HepG2 (cell line): ENCODE measurements at regions of chr7 and their contacts with region 1.

Region 1: DNA sequence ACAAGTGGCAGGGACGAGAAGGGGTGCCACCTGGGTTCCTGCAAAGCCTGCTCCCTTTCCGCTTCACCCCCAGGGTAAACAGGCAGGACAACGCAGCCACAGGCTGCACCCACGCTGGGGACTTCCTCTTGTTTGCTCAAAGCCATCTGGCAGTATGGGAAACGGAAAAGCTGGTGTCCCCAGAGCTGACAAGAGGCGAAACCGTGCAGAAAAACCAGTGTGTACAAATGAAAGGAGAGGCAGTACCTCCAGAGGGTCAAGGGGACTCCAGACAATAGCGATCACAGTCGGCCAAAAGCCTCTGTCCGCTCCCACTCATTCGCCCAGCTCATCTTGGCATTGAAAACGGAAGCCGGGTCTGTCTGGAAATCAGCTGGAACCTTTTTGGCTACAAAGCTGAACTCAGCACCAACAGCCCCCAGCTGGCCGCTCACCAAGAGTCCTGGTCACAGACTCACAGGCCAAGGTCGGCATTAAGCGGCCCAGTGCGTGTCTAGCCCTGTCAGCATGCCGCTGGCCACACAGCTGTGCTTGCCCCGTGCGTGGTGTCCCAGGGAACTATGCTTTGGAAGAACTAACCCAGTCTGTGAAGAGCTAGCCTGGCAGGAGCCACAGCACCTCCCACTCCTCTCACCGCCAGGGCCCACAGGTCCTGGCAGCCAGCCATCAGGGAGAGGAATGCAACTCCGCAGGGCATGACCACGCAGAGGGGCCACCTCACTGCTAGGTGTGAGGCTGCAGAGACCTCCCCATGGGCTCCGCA is 10.4 kb downstream of the TNS3 start:
- DNase-seq: peak; percentile 90
- ATAC-seq: peak; percentile 70
- H3K4me3 ChIP-seq: peak overlapping the region; percentile 5 to 65 (median 43); a peak in 4 of 6 replicates
- H3K27ac ChIP-seq: peak overlapping the region; percentile 80
- H3K4me1 ChIP-seq: peaks cover 81% of the 10 kb centered on the region
- H3K27me3 ChIP-seq: no peaks in the 10 kb centered on the region
- CTCF ChIP-seq: 0 out of 2 replicates have a peak, but pooled peaks have one; percentile 3
- EP300 ChIP-seq: peak in 1 of 2 experiments; percentile 50; a peak in 2 of 4 replicates
- POLR2A ChIP-seq: peak; percentile 43 to 45
- RAD21 ChIP-seq: peak; percentile 30; the same call in 1 of the 2 replicates

Region 2: GRCh38 chr7:47497367-47498096 is 74.0 kb before region 1 on chr7:
- CTCF ChIA-PET with region 1: no interaction called
- POLR2A ChIA-PET with region 1: interaction called, 4 read pairs
- in situ Hi-C with region 1: no loop called
- intact Hi-C with region 1: loop called (anchors 2 kb)
- DNase-seq: no peak
- ATAC-seq: no peak
- H3K4me3 ChIP-seq: no peak overlapping the region
- H3K27ac ChIP-seq: no peak overlapping the region
- H3K4me1 ChIP-seq: peaks cover 82% of the 10 kb centered on the region
- H3K27me3 ChIP-seq: no peaks in the 10 kb centered on the region
- CTCF ChIP-seq: no peak
- EP300 ChIP-seq: no peak
- POLR2A ChIP-seq: no peak
- RAD21 ChIP-seq: no peak

Region 3: DNA sequence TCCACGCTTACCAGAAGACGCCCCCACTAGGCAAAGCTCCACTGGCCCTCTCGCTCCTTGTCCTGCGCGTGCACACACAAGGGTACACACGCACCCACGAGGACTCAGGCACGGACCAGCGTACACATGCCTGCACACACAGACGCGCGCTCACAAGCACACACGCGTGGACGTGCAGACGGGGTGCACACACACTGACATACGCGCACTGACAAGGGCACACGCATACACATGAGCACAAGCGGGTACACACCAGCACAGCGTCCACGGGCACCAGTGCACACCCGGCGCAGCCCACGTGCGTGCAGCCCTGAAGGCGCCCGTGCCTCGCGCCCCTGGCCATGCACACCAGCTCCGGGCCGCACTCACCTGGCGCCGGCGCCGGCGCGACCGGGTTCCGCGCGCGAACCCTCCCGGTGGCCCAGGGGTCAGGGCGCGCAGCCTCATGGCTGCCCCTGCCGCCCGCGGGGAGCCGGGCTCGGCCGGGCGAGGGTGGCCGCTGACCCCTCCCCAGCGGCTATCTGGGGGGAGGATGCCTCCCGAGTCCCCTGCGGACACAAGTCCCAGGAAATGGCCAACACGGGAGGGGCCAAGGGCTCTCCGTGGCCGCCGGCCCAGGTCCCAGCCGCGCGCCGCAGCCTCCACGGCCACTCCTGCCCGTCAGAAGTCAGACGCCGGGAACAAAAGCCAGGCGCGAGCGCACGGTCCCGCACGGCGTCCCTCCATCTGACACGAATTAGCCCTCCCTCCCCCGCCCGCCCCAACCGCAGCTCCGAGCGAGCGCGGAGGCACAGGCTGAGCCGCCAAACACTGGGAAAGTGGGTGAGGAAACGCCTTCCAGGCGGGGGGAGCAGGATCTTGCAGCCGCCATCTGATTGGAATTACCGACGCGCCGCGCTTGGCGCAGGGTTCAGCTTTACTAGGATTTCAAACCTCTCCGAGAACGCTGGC is 34.6 kb before region 1 on chr7:
- CTCF ChIA-PET with region 1: no interaction called
- POLR2A ChIA-PET with region 1: interaction called, 13 read pairs
- in situ Hi-C with region 1: no loop called
- intact Hi-C with region 1: loop called (anchors 1 kb)
- DNase-seq: no peak
- ATAC-seq: no peak
- H3K4me3 ChIP-seq: peak overlapping the region; percentile 6 to 72 (median 41); a peak in 5 of 6 replicates
- H3K27ac ChIP-seq: peak overlapping the region; percentile 86
- H3K4me1 ChIP-seq: peaks cover 96% of the 10 kb centered on the region
- H3K27me3 ChIP-seq: no peaks in the 10 kb centered on the region; a peak in 1 of 5 replicates
- CTCF ChIP-seq: no peak
- EP300 ChIP-seq: no peak
- POLR2A ChIP-seq: no peak
- RAD21 ChIP-seq: no peak

Region 4: DNA sequence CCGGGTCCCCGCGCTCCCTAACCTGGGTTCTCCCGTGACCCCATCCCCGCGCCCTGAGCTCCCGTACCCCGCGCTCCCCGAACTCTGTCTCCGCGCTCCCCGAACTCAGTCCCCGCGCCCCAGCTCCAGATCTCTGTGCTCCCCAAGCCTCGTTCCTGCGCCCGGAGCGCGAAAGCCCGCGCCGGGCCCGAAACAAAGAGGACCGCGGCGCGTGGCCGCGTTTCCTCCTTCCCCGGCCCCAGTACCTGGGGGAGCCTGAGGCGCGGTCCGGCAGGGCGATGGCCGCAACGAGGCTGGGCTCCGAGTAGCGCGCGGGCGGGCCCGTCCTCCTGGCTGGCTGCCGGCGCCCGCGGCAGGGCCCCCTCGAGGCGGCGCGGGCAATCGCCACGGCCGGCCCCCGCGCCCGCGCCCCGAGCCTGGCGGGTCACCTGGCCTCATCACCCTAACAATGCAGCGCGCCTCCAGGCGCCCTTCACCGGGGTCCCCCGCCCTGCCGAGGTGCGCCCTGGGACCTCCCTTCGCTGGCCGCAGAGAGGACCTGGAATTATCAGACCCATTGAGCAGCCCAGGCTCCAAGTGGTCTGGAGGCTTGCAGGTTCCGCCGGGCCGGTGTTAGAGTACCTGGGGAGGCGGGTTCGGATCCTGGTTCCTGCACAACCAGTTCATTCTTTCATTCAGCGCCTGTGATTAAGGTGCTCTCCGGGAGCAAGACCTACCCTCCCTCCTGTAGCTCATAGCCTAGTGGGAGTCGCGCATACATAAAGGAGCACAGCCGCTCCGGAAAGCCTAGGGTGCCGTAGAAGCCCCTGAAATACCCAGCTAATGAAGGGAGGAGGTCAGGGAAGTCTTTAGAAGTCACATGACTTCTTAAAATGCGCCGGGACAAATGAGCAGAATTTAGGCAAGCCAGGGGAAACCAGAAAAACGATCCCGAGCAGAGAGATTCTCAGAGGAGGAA is 10.6 kb after region 1 on chr7 and contains the start of gene TNS3:
- CTCF ChIA-PET with region 1: no interaction called
- POLR2A ChIA-PET with region 1: interaction called, 19 read pairs
- in situ Hi-C with region 1: no loop called
- intact Hi-C with region 1: no loop called
- DNase-seq: no peak
- ATAC-seq: peak; percentile 83
- H3K4me3 ChIP-seq: peak within 1 kb of the TSS; percentile 86 to 91 (median 89)
- H3K27ac ChIP-seq: peak within 1 kb of the TSS; percentile 82
- H3K4me1 ChIP-seq: peaks cover 56% of the 10 kb centered on the region
- H3K27me3 ChIP-seq: no peaks in the 10 kb centered on the region; a peak in 1 of 5 replicates
- CTCF ChIP-seq: peak; percentile 26; the same call in 1 of the 2 replicates
- EP300 ChIP-seq: no peak
- POLR2A ChIP-seq: peak; percentile 25 to 39; a peak in 2 of 4 replicates
- RAD21 ChIP-seq: peak; percentile 89
- total RNA-seq, gene TNS3: 51.3 and 55.7 TPM in 2 replicates

Region 5: DNA sequence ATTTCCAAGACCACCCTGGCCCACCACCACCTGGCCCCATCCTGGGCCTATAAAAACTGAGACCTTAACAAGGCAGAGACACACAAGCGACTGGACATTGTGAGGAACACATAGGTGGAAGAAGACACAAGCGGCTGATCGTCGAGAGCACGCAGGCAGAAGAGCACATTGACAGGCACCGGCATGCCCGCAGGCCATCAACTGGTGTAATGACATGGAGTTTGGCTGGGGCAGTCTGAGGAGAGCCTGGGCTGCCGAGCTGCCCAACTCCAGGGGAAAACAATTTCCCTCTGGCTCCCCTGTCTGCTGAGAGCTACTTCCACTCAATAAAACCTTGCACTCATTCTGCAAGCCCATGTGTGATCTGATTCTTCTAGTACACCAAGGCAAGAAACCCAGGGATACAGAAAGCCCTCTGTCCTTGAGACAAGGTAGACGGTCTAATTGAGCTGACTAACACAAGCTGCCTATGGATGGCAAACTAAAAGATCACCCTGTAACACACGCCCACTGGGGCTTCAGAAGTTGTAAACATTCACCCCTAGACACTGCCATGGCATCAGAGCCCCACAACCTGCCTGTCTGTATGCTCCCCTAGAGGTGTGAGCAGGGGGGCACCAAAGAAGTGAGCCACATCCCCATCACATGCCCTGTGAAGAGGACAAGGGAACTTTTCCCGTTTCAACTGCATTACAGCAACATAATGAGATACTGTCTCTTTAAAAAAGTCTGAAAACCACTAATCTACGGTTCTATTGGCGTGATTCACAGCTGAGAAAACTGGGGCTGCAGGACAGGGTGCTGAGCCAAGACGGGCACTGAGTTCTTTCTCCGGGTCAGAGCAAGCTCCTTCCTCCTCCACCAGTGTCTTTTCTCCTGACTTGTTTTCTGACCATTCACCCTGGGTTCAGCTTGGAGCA is 28.9 kb after region 1 on chr7:
- CTCF ChIA-PET with region 1: no interaction called
- POLR2A ChIA-PET with region 1: interaction called, 9 read pairs
- in situ Hi-C with region 1: no loop called
- intact Hi-C with region 1: loop called (anchors 2 kb)
- DNase-seq: no peak
- ATAC-seq: no peak
- H3K4me3 ChIP-seq: no peak overlapping the region
- H3K27ac ChIP-seq: no peak overlapping the region
- H3K4me1 ChIP-seq: peaks cover 72% of the 10 kb centered on the region
- H3K27me3 ChIP-seq: no peaks in the 10 kb centered on the region
- CTCF ChIP-seq: no peak
- EP300 ChIP-seq: no peak
- POLR2A ChIP-seq: no peak
- RAD21 ChIP-seq: no peak

Region 6: GRCh38 chr7:47677667-47678111 is 106.2 kb after region 1 on chr7:
- CTCF ChIA-PET with region 1: no interaction called
- POLR2A ChIA-PET with region 1: no interaction called
- in situ Hi-C with region 1: no loop called
- intact Hi-C with region 1: no loop called
- DNase-seq: no peak
- ATAC-seq: no peak
- H3K4me3 ChIP-seq: no peak overlapping the region
- H3K27ac ChIP-seq: no peak overlapping the region
- H3K4me1 ChIP-seq: peaks cover 65% of the 10 kb centered on the region
- H3K27me3 ChIP-seq: no peaks in the 10 kb centered on the region
- CTCF ChIP-seq: no peak
- EP300 ChIP-seq: no peak
- POLR2A ChIP-seq: no peak
- RAD21 ChIP-seq: no peak

Region 7: DNA sequence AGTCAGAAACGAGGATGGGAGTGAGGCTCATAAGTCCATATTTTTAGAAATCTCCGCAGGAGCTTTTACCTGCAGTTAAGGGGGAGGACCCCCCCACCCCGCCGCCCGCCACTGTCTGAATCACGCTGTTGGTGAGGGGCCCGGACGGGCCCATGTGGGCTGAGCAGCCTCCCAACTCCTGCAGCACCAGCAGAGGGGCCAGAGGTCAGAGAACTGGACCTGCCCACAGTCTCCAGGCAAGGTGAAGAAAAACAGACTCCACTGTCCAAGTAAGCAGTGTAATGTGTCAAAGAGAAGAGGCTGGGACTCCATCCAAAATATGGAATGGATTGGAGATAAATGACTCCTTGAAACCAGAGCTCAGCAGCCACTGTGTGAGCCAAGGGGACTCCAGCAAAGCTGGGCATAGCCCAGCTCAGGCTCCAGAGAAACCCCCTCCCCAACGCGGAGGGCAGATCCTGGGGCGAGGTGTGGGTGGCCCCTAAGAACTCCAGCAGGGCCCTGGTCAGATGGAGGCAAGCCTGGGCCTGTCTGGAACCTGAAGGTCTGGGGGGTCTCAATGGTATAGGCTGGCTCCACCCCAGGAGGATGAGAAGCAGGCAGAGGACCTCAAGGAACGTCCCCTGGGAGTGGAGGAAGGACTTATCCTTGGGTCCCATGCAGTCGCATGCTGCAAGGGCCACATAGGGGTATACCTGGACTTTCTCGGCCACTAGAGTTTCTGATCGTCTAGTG is 138.9 kb after region 1 on chr7:
- CTCF ChIA-PET with region 1: no interaction called
- POLR2A ChIA-PET with region 1: no interaction called
- in situ Hi-C with region 1: no loop called
- intact Hi-C with region 1: no loop called
- DNase-seq: no peak
- ATAC-seq: no peak
- H3K4me3 ChIP-seq: no peak overlapping the region
- H3K27ac ChIP-seq: no peak overlapping the region
- H3K4me1 ChIP-seq: peaks cover 10% of the 10 kb centered on the region
- H3K27me3 ChIP-seq: no peaks in the 10 kb centered on the region
- CTCF ChIP-seq: no peak
- EP300 ChIP-seq: no peak
- POLR2A ChIP-seq: no peak
- RAD21 ChIP-seq: no peak

Region 8: GRCh38 chr7:47730142-47730541 is 158.6 kb after region 1 on chr7:
- CTCF ChIA-PET with region 1: no interaction called
- POLR2A ChIA-PET with region 1: interaction called, 4 read pairs
- in situ Hi-C with region 1: no loop called
- intact Hi-C with region 1: loop called (anchors 5 kb)
- DNase-seq: no peak
- ATAC-seq: no peak
- H3K4me3 ChIP-seq: no peak overlapping the region
- H3K27ac ChIP-seq: no peak overlapping the region
- H3K4me1 ChIP-seq: peaks cover 60% of the 10 kb centered on the region
- H3K27me3 ChIP-seq: no peaks in the 10 kb centered on the region
- CTCF ChIP-seq: no peak
- EP300 ChIP-seq: no peak
- POLR2A ChIP-seq: no peak
- RAD21 ChIP-seq: no peak

Region 9: DNA sequence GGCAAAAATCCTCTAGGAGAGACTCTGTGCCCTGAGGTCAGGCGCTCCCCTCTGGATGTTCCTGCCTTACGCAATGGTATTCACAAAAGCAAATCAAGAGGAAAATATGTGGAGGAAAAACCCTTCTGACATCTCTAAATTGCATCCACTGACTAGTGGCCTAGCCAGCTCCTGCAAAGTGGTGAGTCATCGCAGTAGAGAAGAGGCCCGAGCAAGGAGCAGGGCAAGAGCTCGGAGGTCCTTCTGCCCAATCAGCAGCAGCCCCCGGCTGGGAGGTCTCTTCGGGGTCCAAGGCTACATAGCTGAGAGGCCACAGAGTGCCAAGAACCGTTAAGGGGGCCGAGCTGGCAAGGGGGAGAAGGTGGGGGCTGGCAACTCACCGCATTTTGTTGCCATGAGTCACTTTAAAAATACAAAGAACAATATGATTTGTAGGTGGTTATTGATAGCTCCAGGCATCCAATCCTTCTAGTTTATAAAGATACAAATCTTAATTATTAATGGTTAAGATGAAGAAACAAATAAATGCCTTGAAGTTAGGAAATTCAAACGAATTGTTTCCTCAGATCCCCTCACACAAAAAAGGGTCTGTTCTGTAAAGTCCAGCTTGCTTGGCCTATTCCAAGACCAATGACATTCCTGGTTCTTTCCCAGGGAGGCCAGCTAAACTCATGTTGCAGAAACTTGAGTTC is 215.2 kb after region 1 on chr7:
- CTCF ChIA-PET with region 1: no interaction called
- POLR2A ChIA-PET with region 1: interaction called, 13 read pairs
- in situ Hi-C with region 1: no loop called
- intact Hi-C with region 1: no loop called
- DNase-seq: peak; percentile 97
- ATAC-seq: peak; percentile 95
- H3K4me3 ChIP-seq: peak overlapping the region in 2 of 3 experiments; percentile 27 to 28; a peak in 4 of 6 replicates
- H3K27ac ChIP-seq: peak overlapping the region; percentile 92
- H3K4me1 ChIP-seq: peaks cover 68% of the 10 kb centered on the region
- H3K27me3 ChIP-seq: no peaks in the 10 kb centered on the region
- CTCF ChIP-seq: no peak
- EP300 ChIP-seq: peak; percentile 16 to 87; a peak in 3 of 4 replicates
- POLR2A ChIP-seq: peak in 1 of 2 experiments; percentile 49; a peak in 2 of 4 replicates
- RAD21 ChIP-seq: peak; percentile 43; the same call in 1 of the 2 replicates